MCF 10A (cell line): ENCODE measurements at regions of chr12 and their contacts with region 1.

Region 1: GRCh38 chr12:10153271-10154144 is 18.4 kb downstream of the OLR1 start:
- DNase-seq: peak; percentile 63
- H3K4me3 Mint-ChIP-seq: peak overlapping the region; percentile 64
- H3K27ac Mint-ChIP-seq: no peak overlapping the region
- H3K4me1 Mint-ChIP-seq: no peaks in the 10 kb centered on the region
- H3K27me3 Mint-ChIP-seq: no peaks in the 10 kb centered on the region
- CTCF ChIP-seq: peak; percentile 56

Region 2: GRCh38 chr12:9786726-9787717 is 366.5 kb before region 1 on chr12:
- CTCF ChIA-PET with region 1: no interaction called
- POLR2A ChIA-PET with region 1: no interaction called
- intact Hi-C with region 1: no loop called
- DNase-seq: no peak
- H3K4me3 Mint-ChIP-seq: no peak overlapping the region
- H3K27ac Mint-ChIP-seq: no peak overlapping the region
- H3K4me1 Mint-ChIP-seq: no peaks in the 10 kb centered on the region
- H3K27me3 Mint-ChIP-seq: peaks cover 36% of the 10 kb centered on the region
- CTCF ChIP-seq: no peak

Region 3: DNA sequence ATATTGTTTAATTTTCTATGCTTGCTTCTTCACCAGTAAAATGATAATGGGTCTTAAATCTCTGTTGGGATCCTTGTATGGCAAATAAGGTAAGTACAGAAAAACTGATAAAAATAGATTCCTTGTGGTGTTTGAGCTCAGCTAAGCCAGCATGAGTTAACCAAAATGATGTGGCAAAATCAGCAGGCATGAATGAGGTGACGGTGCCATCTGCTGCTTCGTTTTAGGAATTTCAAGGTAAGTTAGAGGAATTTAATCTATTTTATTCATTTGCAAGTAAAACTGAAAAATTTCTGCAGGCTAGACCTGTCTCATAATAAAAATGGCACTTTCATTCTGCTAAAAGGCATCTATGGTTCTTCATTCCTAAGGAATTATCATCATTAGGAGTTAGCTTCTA is 13.5 kb before region 1 on chr12:
- CTCF ChIA-PET with region 1: interaction called, 25 read pairs
- POLR2A ChIA-PET with region 1: interaction called, 4 read pairs
- intact Hi-C with region 1: no loop called
- DNase-seq: peak; percentile 72
- H3K4me3 Mint-ChIP-seq: no peak overlapping the region
- H3K27ac Mint-ChIP-seq: no peak overlapping the region
- H3K4me1 Mint-ChIP-seq: no peaks in the 10 kb centered on the region
- H3K27me3 Mint-ChIP-seq: no peaks in the 10 kb centered on the region
- CTCF ChIP-seq: peak; percentile 69

Region 4: DNA sequence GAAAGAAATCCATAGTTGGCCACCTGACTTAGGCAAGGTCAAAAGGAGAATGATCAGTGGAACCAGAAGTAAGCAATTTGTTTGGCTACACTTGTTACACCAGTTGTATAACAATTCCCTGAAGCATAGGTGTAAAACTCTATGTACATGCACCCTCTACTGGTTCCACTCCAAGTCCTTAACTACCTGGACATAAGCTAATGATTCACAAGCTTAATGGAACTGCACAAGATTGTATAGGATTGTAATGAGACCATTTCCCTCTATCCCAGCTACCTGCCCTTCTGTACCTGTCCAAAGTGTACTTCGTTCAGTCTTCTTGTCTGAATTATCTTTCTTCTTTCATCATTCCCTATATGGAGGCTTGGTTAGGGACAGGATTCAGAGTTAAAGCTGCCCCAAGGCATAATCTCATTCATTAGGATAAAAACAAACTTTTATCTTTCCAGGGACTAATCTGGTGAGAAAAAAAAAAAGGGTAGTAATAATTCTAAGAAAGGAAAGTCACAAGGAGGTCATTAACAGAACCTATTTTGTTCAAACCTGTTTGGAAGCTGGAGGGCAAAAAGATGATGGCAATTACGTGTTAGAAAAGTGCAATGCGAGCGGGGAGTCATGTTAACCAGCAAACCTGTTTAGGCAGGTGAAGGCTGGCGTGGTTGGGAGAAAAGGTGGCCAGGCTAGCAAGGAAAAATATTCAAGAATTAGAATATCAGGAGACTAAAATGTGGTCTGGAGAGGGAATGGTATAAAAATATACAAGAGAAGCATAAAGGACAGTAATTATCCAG is 22.5 kb after region 1 on chr12:
- CTCF ChIA-PET with region 1: interaction called, 255 read pairs
- POLR2A ChIA-PET with region 1: interaction called, 16 read pairs
- intact Hi-C with region 1: no loop called
- DNase-seq: peak; percentile 60
- H3K4me3 Mint-ChIP-seq: no peak overlapping the region
- H3K27ac Mint-ChIP-seq: no peak overlapping the region
- H3K4me1 Mint-ChIP-seq: peaks cover 19% of the 10 kb centered on the region
- H3K27me3 Mint-ChIP-seq: no peaks in the 10 kb centered on the region
- CTCF ChIP-seq: no peak

Region 5: DNA sequence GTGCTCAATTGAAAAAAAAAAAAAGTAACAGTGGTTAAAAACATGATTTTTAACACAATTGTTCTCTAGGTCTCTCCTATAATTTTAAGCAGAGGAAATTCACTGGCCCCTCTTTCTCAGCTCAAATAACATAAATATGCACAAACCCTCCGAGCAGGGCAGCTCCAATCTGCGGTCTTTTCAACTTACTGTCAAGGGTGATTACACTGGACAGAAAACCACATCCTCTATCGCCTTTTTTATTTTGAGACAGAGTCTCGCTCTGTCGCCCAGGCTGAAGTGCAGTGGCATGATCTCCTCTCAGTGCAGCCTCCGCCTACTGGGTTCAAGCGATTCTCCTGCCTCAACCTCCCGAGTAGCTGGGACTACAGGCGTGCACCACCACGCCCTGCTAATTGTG is 42.7 kb after region 1 on chr12:
- CTCF ChIA-PET with region 1: interaction called, 255 read pairs
- POLR2A ChIA-PET with region 1: interaction called, 20 read pairs
- intact Hi-C with region 1: no loop called
- DNase-seq: no peak
- H3K4me3 Mint-ChIP-seq: no peak overlapping the region
- H3K27ac Mint-ChIP-seq: no peak overlapping the region
- H3K4me1 Mint-ChIP-seq: peaks cover 19% of the 10 kb centered on the region
- H3K27me3 Mint-ChIP-seq: no peaks in the 10 kb centered on the region
- CTCF ChIP-seq: no peak

Region 6: GRCh38 chr12:10501031-10501430 is 347.5 kb after region 1 on chr12:
- CTCF ChIA-PET with region 1: no interaction called
- POLR2A ChIA-PET with region 1: no interaction called
- intact Hi-C with region 1: loop called (anchors 5 kb)
- DNase-seq: peak; percentile 26
- H3K4me3 Mint-ChIP-seq: no peak overlapping the region
- H3K27ac Mint-ChIP-seq: no peak overlapping the region
- H3K4me1 Mint-ChIP-seq: peaks cover 6% of the 10 kb centered on the region
- H3K27me3 Mint-ChIP-seq: no peaks in the 10 kb centered on the region
- CTCF ChIP-seq: peak; percentile 65

Region 7: DNA sequence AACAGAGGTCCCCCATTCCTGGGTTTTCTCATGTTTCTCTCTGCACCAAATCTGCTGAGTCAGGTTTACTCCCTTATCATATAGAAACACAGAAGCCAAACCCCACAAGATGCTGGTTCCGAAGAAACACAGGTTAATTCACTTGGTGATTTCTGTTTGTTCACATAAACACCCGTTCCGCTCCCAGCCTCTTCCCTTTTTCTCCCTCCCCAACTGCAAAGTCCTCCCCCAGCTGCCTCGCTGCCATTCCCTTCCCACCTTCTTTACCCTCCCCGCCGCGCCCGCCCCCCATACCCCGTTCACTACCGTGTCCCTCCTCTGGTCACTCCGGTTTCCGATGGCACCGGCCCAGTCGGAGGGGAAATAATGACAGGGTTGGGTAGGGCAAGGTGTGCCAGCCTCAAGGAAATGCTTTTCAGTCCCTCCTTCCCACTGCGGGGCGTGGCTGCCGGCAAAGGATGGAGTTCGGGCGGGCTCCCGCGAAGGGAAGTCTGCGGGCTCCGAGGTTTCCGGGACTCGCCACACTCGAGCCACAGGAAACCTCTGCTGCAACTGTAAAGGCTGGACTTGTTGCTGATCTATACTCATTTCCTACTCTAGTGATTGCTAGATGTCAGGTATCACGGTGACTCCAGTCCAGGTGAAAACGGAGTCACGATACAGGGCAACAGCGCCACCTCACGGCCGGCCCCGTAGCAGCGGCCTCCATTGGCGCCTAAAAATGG is 520.3 kb after region 1 on chr12 and contains the start of gene STYK1:
- CTCF ChIA-PET with region 1: no interaction called
- POLR2A ChIA-PET with region 1: no interaction called
- intact Hi-C with region 1: loop called (anchors 1 kb)
- DNase-seq: peak; percentile 72
- H3K4me3 Mint-ChIP-seq: peak within 1 kb of the TSS; percentile 74
- H3K27ac Mint-ChIP-seq: no peak within 1 kb of the TSS
- H3K4me1 Mint-ChIP-seq: no peaks in the 10 kb centered on the region
- H3K27me3 Mint-ChIP-seq: no peaks in the 10 kb centered on the region
- CTCF ChIP-seq: peak; percentile 96
- total RNA-seq, gene STYK1: 0.14 and 0.56 TPM in 2 replicates